Dorsolateral prefrontal cortex (tissue), 120 donors: ENCODE measurements at regions of chr11 and their contacts with region 1.

Region 1: DNA sequence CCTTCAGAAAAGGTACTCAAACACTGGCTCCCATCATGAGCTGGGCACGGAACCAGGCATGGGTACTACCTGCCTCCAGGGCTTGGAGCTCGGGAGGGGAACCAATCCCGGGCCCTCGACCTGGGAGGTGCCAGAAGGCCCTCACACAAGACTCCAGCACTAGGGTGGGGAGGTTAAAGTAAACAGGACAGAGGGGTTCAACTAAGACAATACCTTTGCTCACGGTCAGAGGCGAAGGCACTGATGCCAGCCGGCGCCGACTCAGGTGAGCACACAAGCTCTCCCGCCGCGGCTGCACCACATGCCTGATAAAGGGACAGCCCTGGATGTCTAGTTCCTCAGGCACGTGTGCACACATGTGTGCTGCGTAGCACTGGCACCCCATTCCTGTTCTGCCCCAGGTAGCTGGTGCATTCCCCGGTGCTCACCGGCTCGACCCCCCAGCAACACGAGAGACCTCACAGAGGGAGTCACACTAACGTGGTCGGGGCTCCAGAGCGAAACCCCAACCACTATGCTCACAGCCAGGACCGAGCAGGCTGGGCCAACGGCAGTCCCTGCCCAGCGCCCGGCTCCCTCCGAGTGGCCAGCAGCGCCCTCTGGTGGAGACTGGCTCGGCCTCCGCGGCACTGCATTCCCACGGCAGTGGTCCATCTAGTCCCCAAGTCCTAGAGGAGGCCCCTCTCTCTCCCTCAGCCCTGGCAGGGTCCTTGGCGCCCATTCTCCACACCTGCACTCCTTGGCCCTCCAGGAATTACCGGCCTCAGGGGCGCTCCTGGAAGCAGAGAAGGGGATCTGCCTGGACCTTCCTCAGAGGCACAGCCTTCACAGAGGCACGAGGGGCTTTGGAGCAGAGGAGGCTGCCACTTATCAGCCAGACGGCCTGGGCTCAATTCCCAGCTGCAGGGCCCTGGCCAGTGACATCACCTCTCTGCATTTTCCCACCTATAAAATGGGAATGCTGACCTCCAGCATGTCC is 28.8 kb upstream of the MOB2 start:
- DNase-seq: peak; percentile 78 to 93 (median 86)
- H3K4me3 ChIP-seq: peak overlapping the region in 48 of 59 donors; percentile 8 to 58 (median 33)
- H3K27ac ChIP-seq: peak overlapping the region in 38 of 59 donors; percentile 1 to 74 (median 44)
- H3K27me3 ChIP-seq: no peaks in the 10 kb centered on the region
- CTCF ChIP-seq: peak; percentile 82 to 99 (median 97)

Region 2: DNA sequence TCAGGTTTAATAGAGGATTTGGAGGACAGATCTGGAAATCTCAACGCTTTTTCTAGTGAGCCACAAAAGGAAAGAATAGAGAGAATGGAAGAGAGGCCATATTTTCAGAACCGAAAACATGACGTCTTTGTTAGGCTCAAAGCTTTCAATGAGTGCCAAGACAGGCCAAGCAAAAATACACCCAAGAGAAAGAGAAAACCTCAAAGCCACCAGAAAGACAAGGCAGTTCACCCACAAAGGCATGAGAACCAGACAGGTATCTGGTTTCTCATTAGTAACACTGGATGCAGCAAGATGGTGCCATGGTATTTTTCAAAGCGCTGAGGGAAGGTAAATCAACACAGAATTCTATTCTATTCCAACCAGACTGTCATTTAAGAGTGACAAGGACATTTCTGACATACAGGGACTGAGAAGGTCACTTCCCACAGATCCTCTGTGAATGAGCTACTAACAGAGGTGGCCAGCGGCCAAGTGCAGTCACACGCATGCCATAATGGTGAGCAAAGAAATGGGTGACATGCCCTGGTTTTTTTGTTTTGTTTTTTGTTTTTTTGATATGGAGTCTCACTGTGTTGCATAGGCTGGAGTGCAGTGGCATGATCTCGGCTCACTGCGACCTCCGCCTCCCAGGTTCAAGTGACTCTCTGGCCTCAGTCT is 247.8 kb before region 1 on chr11:
- intact Hi-C with region 1: loop called in 1 of 2 experiments (anchors 5 kb)
- DNase-seq: peak in 2 of 10 donors; percentile 49 to 54
- H3K4me3 ChIP-seq: no peak overlapping the region
- H3K27ac ChIP-seq: peak overlapping the region in 15 of 59 donors; percentile 1 to 48 (median 24)
- H3K27me3 ChIP-seq: no peaks in the 10 kb centered on the region
- CTCF ChIP-seq: no peak

Region 3: GRCh38 chr11:1309498-1310317 is 205.7 kb before region 1 on chr11 and contains the start of gene TOLLIP:
- intact Hi-C with region 1: loop called in 1 of 2 experiments (anchors 5 kb)
- DNase-seq: peak; percentile 87 to 98 (median 94)
- H3K4me3 ChIP-seq: peak within 1 kb of the TSS; percentile 47 to 100 (median 90)
- H3K27ac ChIP-seq: peak within 1 kb of the TSS; percentile 56 to 99 (median 96)
- H3K27me3 ChIP-seq: no peaks in the 10 kb centered on the region
- CTCF ChIP-seq: peak; percentile 26 to 86 (median 69)
- total RNA-seq, gene TOLLIP: 129 to 348 (median 261) TPM

Region 4: DNA sequence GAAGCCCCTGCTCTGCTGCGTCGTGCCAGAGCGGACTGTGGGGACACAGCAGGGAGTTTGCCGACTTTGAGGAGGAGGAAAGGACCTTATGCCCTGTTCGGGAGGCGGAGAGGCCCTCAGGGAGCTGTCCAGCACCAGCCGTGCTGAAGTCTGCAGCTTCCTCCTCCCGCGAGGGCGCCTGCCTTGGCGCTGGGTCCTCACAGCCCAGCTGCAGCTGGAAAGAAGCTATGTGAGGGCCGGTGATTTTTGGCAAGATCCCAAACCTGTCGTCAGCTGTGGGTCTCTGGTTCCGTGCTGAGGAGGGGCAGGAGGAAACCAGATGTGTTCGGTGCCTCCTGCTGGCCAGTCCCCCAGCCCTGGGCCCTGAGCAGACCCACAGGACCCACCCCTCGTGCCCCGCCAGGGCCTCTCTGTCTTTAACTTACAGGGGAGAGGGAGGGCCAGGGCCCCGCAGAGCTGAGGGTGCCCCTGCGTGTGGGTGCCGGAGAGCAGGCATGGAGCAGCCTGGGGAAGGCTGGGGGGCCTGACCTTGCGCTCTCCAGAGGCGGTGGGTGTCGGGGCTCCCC is 113.6 kb before region 1 on chr11:
- intact Hi-C with region 1: loop called (anchors 5 to 10 kb)
- DNase-seq: peak; percentile 19 to 84 (median 74)
- H3K4me3 ChIP-seq: peak overlapping the region in 45 of 59 donors; percentile 1 to 47 (median 25)
- H3K27ac ChIP-seq: peak overlapping the region in 48 of 59 donors; percentile 6 to 99 (median 72)
- H3K27me3 ChIP-seq: no peaks in the 10 kb centered on the region
- CTCF ChIP-seq: peak in 14 of 56 donors; percentile 7 to 30 (median 15)

Region 5: DNA sequence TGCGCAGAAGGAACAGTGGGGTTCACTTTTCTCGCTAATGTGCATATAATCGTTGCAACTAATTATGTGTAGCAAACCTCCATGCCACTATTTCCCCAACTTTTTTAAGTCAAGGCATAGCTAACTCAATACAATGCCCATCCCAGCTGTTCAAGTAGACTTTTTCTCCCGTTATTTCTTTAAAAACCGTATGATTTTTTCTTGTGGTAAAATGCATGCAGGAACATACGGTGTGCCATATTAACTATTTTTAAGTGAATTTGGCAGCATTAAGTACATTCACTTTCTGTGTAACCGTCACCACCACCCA is 59.5 kb after region 1 on chr11:
- intact Hi-C with region 1: no loop called
- DNase-seq: no peak
- H3K4me3 ChIP-seq: peak overlapping the region in 50 of 59 donors; percentile 12 to 82 (median 68)
- H3K27ac ChIP-seq: peak overlapping the region in 36 of 59 donors; percentile 2 to 97 (median 89)
- H3K27me3 ChIP-seq: no peaks in the 10 kb centered on the region
- CTCF ChIP-seq: peak in 13 of 56 donors; percentile 3 to 32 (median 9)

Region 6: DNA sequence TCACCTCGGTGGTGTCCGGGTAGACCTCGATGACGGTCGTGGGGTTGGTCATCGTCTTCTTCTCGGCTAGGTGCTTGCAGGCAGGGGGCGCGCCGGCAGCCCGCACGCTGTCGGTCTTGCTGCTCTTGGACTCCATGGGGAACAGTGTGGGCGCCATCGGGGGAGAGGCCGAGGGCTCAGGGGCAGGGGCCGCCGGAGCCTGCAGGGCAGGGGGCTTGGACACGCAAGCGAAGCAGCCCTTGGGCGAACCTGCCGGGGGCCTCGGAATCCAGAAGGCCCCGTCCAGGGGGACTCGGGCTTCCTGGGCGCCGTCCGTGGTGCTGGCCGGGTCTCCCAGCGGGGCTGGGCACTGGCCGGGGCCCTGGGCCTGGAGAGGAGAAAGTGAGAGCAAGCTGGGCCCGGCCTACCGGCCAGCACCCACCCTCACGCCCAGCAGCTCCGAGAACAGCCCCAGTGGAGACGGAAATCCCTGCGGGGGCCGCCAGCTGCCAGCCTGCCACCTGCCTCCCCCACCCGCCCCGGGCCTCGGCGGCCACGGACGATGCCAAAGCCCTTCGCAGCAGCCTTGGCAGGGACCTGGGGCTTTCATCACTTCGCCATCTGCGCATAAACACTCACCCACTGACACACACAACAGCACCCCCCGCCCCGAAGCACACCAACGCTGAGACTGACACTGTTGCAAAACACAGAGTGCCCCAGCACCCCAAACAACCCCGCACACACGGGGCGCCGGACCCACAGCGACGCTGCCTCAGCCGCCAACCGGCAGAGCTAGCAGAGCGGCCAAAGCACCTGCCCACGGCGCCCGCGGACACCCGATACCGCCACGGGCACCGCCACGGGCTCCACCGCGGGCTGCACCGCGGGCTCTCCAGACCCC is 232.6 kb after region 1 on chr11:
- intact Hi-C with region 1: no loop called
- DNase-seq: peak in 9 of 10 donors; percentile 62 to 89 (median 78)
- H3K4me3 ChIP-seq: peak overlapping the region; percentile 39 to 72 (median 59)
- H3K27ac ChIP-seq: peak overlapping the region in 56 of 59 donors; percentile 32 to 93 (median 80)
- H3K27me3 ChIP-seq: no peaks in the 10 kb centered on the region
- CTCF ChIP-seq: peak in 10 of 56 donors; percentile 5 to 30 (median 16)